ENCODE measurements at regions of chr17 and their contacts with region 1.

Region 1: DNA sequence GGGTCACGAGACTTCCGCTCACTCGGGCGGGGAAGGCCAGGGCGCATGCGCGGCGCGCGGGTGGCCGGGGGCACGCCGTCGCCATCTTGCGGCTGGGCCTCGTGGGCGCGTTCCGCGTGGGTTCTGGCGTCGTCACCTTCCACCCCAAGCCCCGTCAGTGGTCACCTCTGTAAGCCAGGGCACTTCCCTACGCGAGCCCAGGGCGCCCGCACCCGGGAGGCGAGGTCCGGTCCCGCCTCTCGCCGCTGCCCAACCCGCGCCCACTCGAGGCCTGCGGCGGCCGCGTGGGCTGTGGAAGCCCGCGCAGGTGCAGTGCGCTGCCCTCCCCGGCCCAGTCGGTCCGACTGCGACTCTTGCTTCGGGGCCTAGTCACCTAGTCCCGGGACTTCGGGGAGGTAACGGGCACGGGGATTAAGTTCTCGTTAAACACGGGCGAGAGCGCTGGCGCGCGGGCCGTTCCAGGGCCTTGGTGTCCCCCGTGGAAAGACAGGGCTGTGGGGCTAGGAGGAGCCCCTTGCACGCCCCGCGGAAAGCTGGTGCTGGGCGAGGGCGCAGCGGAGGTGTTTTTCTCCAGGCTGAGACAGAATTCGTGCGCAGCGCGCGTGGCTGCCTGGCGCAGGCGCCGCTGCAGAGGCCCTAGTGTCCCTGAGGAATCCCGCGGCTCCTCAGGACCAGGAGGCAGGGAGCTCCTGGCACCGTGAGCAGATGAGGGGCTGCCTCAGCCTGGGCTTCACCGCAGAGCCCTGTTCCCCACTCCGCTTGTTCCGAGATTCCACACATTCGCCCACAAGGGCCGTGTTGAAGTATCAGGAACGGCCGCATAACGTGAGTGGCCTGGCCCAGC is 472 bp upstream of the ARHGDIA start:
- DNase-seq: peak; percentile 80
- ATAC-seq: peak; percentile 0
- H3K4me3 ChIP-seq: peak overlapping the region; percentile 71 to 87
- H3K27ac ChIP-seq: peak overlapping the region; percentile 99
- H3K4me1 ChIP-seq: peaks cover 32 to 67% of the 10 kb centered on the region in 2 experiments
- H3K27me3 ChIP-seq: no peaks in the 10 kb centered on the region
- CTCF ChIP-seq: no peak; a peak in 1 of 6 replicates
- POLR2A ChIP-seq: no peak
- RAD21 ChIP-seq: no peak

Region 2: DNA sequence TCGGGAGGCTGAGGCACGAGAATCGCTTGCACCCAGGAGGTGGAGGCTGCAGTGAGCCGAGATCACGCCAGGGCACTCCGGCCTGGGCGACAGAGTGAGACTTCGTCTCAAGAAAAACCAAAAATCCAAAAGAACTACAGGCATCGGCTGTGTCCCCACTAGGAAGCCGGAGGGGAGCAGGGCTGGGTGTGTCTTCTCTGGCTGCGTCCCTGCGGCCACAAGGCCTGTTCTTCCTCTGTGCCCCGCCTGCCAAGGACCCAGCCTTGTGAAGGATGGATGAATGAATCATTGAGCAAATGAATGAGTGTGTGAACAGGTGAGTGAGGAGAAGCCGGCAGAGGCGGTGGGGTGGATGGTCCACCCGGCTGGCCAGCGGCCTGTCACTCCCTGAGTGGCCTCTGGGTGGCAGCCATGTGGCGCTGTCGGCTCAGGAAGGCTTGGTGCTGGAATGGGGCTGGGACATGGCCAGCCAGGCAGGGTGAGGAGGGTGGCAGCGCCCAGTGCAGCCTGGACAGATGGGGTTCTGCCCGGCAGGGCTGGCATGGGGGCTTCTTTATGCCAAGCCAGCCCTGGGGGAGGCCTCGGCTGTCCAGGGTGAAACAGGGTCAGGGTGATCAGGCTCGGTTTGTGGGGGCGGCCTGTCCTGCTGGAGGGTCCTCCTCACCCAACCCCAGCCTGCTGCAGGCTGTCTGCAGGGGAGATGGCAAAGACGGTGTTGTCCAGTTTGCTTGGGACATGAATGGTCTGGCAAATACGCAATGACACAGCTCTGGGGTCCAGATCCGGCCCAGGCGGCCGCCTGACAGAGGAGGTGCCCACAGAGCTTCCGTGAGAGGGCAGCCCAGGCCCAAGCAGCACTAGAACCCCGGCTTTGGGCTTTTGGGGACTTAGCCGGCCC is 137.9 kb before region 1 on chr17:
- CTCF ChIA-PET with region 1: interaction called, 3 read pairs
- POLR2A ChIA-PET with region 1: interaction called, 3 read pairs
- RAD21 ChIA-PET with region 1: no interaction called
- intact Hi-C with region 1: loop called (anchors 1 kb)
- DNase-seq: peak; percentile 62
- ATAC-seq: peak; percentile 87
- H3K4me3 ChIP-seq: no peak overlapping the region
- H3K27ac ChIP-seq: peak overlapping the region; percentile 5; the same call in 1 of the 2 replicates
- H3K4me1 ChIP-seq: peaks cover 23 to 30% of the 10 kb centered on the region in 2 experiments
- H3K27me3 ChIP-seq: no peaks in the 10 kb centered on the region
- CTCF ChIP-seq: peak; percentile 91 to 98 (median 98)
- POLR2A ChIP-seq: no peak
- RAD21 ChIP-seq: peak; percentile 99

Region 3: GRCh38 chr17:81927653-81928543 is 56.3 kb after region 1 on chr17 and contains the start of gene MAFG:
- CTCF ChIA-PET with region 1: interaction called, 5 read pairs
- POLR2A ChIA-PET with region 1: interaction called, 6 read pairs
- RAD21 ChIA-PET with region 1: no interaction called
- intact Hi-C with region 1: loop called (anchors 5 kb)
- DNase-seq: peak; percentile 87
- ATAC-seq: peak; percentile 62
- H3K4me3 ChIP-seq: peak within 1 kb of the TSS; percentile 89 to 93
- H3K27ac ChIP-seq: peak within 1 kb of the TSS; percentile 97
- H3K4me1 ChIP-seq: peaks cover 44 to 77% of the 10 kb centered on the region in 2 experiments
- H3K27me3 ChIP-seq: no peaks in the 10 kb centered on the region
- CTCF ChIP-seq: peak in 2 of 3 experiments; percentile 65 to 69; a peak in 5 of 6 replicates
- POLR2A ChIP-seq: peak; percentile 24
- RAD21 ChIP-seq: no peak
- total RNA-seq, gene MAFG: 46.8 TPM

Region 4: GRCh38 chr17:82153745-82154375 is 282.3 kb after region 1 on chr17:
- CTCF ChIA-PET with region 1: no interaction called
- POLR2A ChIA-PET with region 1: no interaction called
- RAD21 ChIA-PET with region 1: no interaction called
- intact Hi-C with region 1: no loop called
- DNase-seq: peak; percentile 54
- ATAC-seq: peak; percentile 96
- H3K4me3 ChIP-seq: no peak overlapping the region
- H3K27ac ChIP-seq: no peak overlapping the region
- H3K4me1 ChIP-seq: no peaks in the 10 kb centered on the region; a peak in 1 of 4 replicates
- H3K27me3 ChIP-seq: no peaks in the 10 kb centered on the region
- CTCF ChIP-seq: peak; percentile 95 to 99 (median 98)
- POLR2A ChIP-seq: no peak
- RAD21 ChIP-seq: peak; percentile 97